HEK293 (cell line): ENCODE measurements at regions of chr12 and their contacts with region 1.

Region 1: DNA sequence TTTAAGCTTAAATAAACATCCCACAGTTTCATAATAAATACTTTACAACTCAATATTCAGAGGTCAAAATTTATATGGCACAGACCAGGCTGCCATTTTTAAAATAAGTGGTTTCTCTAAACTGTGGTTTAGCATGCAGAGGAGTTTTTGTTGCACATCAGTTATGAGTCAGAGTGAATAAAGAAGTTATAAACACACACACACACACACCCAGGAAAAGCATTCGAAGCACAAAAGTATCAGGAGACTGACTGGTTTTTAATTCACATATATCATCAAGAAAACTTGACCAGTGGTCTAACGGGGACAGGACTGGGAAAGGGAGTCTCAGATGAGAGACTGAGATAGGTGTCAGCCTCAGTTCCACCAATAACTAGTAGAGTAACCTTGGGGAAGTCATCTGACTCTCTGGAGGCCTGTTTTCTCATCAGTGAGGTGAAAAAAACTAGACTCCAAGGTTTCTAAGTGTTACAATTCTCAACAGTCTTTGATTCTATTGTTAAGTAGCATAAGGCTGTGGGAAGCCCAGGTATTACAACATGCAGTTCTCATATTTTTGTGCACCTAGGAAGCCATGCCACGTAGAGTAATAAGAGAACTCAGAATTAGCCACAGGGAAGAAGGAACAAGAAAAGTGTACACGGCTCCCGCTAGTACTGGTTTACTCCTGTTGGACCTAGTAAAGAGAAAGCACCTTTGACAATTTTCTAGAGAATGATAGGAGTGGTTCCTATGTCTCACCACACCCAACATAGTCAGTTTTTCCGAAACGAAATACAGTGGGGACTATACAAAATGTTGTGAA is 5.2 kb downstream of the PPTC7 start:
- H3K4me3 ChIP-seq: no peak overlapping the region
- H3K27ac ChIP-seq: 0 out of 2 replicates have a peak overlapping the region, but pooled peaks have one; percentile 10
- H3K4me1 ChIP-seq: peaks cover 22% of the 10 kb centered on the region
- CTCF ChIP-seq: no peak

Region 2: GRCh38 chr12:110468212-110469048 is 109.5 kb before region 1 on chr12 and contains the starts of genes FAM216A and GPN3:
- CTCF ChIA-PET with region 1: interaction called, 10 read pairs
- POLR2A ChIA-PET with region 1: interaction called, 4 read pairs
- H3K4me3 ChIP-seq: peak within 1 kb of the TSS; percentile 78
- H3K27ac ChIP-seq: peak within 1 kb of the TSS; percentile 93
- H3K4me1 ChIP-seq: peaks cover 5% of the 10 kb centered on the region; the same call in 1 of the 2 replicates
- CTCF ChIP-seq: no peak

Region 3: DNA sequence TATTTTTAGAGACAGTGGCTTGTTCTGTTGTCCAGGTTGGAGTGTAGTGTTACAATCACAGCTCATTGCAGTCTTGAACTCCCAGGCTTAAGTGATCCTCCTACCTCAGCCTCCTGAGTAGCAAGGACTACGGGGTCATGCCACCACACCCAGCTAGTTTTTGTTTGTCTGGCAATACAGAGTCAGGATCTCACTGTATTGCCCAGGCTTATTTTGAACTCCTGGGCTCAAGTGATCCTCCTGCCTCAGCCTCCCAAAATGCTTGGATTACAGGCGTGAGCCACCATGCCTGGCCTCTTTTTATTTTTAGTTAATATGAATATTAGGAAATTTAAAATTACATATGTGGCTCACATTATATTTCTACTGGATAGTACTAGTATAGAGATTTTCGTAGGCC is 23.7 kb before region 1 on chr12:
- CTCF ChIA-PET with region 1: interaction called, 10 read pairs
- POLR2A ChIA-PET with region 1: no interaction called
- H3K4me3 ChIP-seq: no peak overlapping the region
- H3K27ac ChIP-seq: no peak overlapping the region
- H3K4me1 ChIP-seq: peaks cover 4% of the 10 kb centered on the region; the same call in 1 of the 2 replicates
- CTCF ChIP-seq: no peak